ENCODE measurements at regions of chr5 and their contacts with region 1.

Region 1: GRCh38 chr5:115888027-115888426 is 46.3 kb downstream of the AP3S1 start:
- DNase-seq: no peak
- H3K4me3 ChIP-seq: no peak overlapping the region
- H3K27ac ChIP-seq: no peak overlapping the region
- H3K27me3 ChIP-seq: no peaks in the 10 kb centered on the region
- CTCF ChIP-seq: peak; percentile 44

Region 2: GRCh38 chr5:116032094-116032517 is 144.1 kb after region 1 on chr5 and contains the start of gene ARL14EPL:
- CTCF ChIA-PET with region 1: interaction called, 22 read pairs
- POLR2A ChIA-PET with region 1: no interaction called
- DNase-seq: peak; percentile 52
- H3K4me3 ChIP-seq: no peak within 1 kb of the TSS
- H3K27ac ChIP-seq: no peak within 1 kb of the TSS
- H3K27me3 ChIP-seq: no peaks in the 10 kb centered on the region
- CTCF ChIP-seq: peak; percentile 53
- polyA plus RNA-seq, gene ARL14EPL: 0.05 TPM in 2 replicates

Measured in AG04450 (cell line).